Right ventricle myocardium superior (tissue), 1 donor: ENCODE measurements at regions of chr5 and their contacts with region 1.

Region 1: DNA sequence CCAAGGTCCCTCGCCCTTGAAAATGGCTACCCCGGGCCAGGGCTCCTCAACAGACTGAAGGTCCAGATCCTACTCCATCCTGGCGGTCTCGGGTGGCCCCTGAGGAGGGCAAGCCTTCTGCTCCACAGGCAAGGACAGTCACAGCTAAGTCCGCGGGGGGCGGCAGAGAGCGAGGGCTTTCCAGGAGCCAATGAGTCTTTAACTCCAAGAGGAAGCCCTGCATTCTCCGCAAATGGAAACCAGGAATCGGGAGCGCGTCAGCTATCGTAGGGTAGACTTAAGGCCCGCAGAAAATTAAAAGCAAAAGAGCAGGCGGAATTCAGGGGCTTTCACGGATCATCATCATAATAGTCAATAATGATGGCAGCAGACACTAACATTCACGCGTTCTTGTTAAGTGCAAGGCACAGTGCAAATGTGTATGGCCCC is 87.8 kb upstream of the TNFAIP8 start:
- DNase-seq: peak; percentile 97
- ATAC-seq: peak; percentile 91

Region 2: GRCh38 chr5:119070828-119071572 is 197.0 kb before region 1 on chr5 and contains the start of gene DMXL1:
- intact Hi-C with region 1: loop called (anchors 10 kb)
- DNase-seq: peak; percentile 100
- ATAC-seq: peak; percentile 98
- total RNA-seq, gene DMXL1: 23.3 TPM

Region 3: GRCh38 chr5:119322948-119323537 is 55.1 kb after region 1 on chr5:
- intact Hi-C with region 1: loop called (anchors 5 kb)
- DNase-seq: no peak
- ATAC-seq: no peak